ENCODE measurements at regions of chr16 and their contacts with region 1.

Region 1: GRCh38 chr16:58336332-58337089 is 41.7 kb upstream of the PRSS54 start:
- DNase-seq: peak; percentile 7
- H3K4me3 ChIP-seq: no peak overlapping the region
- H3K27me3 ChIP-seq: no peaks in the 10 kb centered on the region
- CTCF ChIP-seq: peak; percentile 94

Region 2: GRCh38 chr16:57863434-57864160 is 472.9 kb before region 1 on chr16:
- CTCF ChIA-PET with region 1: no interaction called
- POLR2A ChIA-PET with region 1: no interaction called
- DNase-seq: peak; percentile 40
- H3K4me3 ChIP-seq: no peak overlapping the region
- H3K27me3 ChIP-seq: no peaks in the 10 kb centered on the region
- CTCF ChIP-seq: peak; percentile 77

Region 3: DNA sequence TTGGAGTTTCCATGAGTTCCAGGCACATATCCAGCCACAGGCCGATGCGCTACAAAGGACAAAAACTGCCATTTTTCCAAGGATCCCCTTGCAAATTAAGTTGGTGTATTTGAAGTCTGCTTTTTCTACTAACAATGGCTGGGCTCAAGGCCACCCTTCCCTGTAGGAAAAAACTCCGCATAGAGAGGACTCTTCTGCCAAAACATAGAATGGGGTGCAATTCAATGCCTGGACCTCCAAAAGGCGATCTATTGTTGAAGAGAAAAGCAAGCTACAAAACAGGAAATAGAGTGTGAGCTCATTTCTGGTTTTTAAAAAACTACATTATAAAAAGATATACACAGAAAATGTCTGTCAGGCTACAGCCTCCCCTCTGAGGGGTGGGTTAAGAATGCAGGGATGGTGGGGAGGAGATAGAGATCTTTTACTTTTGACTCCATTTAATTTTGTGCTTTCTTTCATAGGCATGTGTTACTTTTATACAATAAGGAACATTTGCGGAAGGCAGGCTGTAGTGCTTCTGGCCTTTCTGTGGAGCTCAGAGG is 18.8 kb before region 1 on chr16:
- CTCF ChIA-PET with region 1: interaction called, 44 read pairs
- POLR2A ChIA-PET with region 1: no interaction called
- DNase-seq: no peak
- H3K4me3 ChIP-seq: no peak overlapping the region
- H3K27me3 ChIP-seq: no peaks in the 10 kb centered on the region
- CTCF ChIP-seq: no peak

Region 4: DNA sequence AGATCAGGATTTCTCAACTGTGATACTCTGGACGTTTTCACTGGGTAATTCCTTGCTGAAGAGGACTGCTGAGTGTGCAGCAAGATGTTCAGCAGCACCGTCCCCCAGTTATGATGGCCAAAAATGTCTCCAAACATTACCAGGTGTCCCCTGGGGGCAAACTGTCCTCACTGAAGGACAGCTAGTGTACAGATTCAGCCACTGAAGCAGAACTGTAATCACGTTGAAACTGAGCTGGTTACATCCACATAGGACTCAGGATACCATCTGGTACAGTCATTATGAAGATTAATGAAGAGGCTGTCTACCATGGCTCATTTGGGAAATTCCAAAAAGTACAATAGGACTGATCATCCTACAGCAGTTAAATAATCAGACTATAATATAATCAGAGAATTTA is 12.5 kb after region 1 on chr16:
- CTCF ChIA-PET with region 1: interaction called, 11 read pairs
- POLR2A ChIA-PET with region 1: no interaction called
- DNase-seq: no peak
- H3K4me3 ChIP-seq: no peak overlapping the region
- H3K27me3 ChIP-seq: peaks cover 7% of the 10 kb centered on the region
- CTCF ChIP-seq: no peak

Region 5: GRCh38 chr16:58487566-58488351 is 151.2 kb after region 1 on chr16:
- CTCF ChIA-PET with region 1: interaction called, 190 read pairs
- POLR2A ChIA-PET with region 1: no interaction called
- DNase-seq: no peak
- H3K4me3 ChIP-seq: no peak overlapping the region
- H3K27me3 ChIP-seq: peaks cover 2% of the 10 kb centered on the region; the same call in 1 of the 2 replicates
- CTCF ChIP-seq: peak; percentile 97

Region 6: DNA sequence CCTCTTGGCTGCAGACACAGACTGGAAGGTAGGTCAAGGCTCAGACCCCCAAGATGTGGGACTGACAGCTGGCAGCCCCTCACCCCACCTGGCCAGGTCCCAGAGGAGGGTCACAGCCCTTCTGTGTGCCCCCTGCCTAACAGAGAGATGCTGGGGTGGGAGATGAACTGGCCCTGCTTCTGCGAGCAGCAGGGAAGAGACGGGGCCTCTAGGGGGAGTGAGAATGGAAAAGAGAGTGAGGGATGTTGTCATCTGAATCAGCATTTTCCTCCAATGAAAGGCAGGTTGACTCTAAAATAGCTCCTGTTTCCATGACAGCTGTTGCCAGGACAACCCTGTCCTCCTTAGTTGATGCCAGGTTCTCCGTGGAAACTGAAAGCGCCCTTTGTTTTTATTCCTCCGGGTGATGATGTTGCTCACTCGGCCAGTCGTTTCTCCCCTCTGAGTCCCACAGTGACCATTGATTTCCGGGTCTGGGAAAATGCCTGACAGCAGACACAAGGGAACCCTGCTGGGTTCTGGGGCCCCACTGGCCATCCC is 158.5 kb after region 1 on chr16:
- CTCF ChIA-PET with region 1: interaction called, 190 read pairs
- POLR2A ChIA-PET with region 1: no interaction called
- DNase-seq: peak; percentile 75
- H3K4me3 ChIP-seq: no peak overlapping the region
- H3K27me3 ChIP-seq: peaks cover 6% of the 10 kb centered on the region; the same call in 1 of the 2 replicates
- CTCF ChIP-seq: peak; percentile 77

Region 7: DNA sequence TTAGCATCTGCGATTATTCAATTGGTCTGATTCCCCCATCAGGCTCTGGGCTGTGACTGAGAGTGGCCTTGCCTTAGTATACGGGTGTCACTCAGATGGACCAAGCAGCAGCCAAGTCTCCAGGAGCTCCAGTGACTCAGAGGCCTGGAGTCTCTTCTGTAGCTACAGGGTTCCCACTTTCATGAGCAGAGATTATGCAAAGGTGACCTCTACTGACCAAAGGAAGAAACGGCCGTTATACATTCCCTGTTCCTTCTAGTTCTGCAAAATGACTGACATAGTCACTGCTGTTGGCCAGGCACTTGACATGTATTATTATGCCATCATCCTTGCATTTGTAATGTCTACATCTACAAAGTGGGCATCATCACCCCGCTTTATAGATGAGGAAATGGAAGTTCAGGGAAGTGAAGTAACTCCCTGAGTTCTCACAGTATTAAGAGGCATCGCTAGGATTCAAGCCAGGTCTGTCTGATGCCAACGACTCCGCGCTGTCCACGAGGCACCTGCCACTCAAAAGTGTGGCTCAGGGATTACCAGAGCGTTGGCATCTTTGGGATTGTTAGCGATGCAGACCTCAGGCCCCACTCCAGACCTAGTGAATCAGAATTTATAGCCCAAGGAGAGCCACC is 324.8 kb after region 1 on chr16:
- CTCF ChIA-PET with region 1: interaction called, 23 read pairs
- POLR2A ChIA-PET with region 1: no interaction called
- DNase-seq: peak; percentile 46
- H3K4me3 ChIP-seq: no peak overlapping the region
- H3K27me3 ChIP-seq: no peaks in the 10 kb centered on the region
- CTCF ChIP-seq: peak; percentile 70

Region 8: DNA sequence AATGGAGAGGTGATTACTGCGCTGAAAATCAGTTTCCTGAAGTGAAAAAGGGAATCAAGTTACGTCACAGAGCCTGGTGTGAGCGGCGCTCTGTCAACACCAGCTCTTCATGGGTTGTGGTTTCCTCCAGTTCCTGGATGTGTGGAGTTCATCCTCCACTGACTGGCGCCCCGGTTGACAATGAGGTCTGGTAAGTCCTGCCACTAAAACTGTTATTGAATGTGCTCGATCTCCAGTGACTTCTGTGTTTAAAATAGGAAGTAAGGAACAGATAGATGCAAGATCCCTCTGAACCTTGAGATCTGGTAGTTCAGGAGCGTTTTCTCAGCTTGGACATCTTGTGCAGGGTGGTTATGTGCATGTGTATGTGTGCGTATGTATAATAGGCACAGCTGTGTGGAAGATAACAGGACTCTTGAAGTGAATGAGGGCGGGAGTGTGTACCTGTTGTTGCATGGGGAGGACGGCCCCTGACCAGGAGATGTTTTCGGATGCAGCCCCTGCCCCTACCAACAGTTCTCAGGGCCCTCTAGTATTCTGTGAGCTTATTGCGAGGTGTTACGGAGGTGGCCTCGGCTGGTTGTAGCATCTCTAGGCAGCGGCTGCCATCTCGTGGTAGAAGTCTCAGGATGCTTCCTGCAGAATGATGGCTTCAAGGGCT is 419.6 kb after region 1 on chr16:
- CTCF ChIA-PET with region 1: interaction called, 12 read pairs
- POLR2A ChIA-PET with region 1: no interaction called
- DNase-seq: no peak
- H3K4me3 ChIP-seq: no peak overlapping the region
- H3K27me3 ChIP-seq: peaks cover 2% of the 10 kb centered on the region; the same call in 1 of the 2 replicates
- CTCF ChIP-seq: peak; percentile 78